ENCODE measurements at regions of chr16 and their contacts with region 1.

Region 1: DNA sequence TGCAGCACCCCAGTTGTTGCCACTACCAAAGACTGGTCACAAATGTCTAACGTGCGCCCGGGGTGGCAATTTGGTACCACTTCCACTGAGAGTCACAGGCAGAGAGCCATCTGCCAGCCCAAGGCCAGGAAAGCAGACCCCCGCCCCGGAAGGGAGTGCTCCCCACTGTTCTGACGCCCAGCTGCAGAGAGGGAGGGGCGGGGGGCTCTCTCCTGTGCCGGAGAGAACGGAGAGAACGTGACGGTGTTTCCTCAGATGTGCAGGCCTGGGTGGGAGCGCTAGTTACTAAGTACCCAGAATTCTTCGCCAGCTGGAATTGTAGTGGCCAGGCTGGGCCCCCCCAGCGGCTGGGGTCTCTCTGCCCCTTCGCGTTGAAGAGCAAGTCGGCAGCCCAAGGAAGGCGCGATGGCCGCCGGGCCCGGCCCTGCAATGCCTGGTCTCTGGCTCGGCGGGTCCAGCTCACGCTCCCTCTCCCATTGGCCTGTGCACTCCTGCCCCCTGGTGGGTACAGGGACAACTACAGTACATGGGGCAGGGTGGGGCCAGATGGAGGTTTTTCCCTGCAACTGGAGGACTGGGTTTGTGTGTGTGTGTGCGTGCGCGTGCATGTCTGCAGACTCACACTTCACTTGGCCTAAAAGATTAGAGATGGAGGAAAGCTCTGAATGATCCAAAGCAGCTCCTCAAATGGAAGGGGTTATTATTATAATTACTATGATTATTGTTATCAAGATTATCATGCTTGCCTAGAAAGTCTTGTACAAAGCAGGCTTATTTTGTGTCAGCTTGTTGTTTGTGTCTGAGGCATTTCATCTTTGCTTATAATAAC is 107.1 kb downstream of the AMFR start:
- DNase-seq: peak; percentile 91
- CTCF ChIP-seq: peak; percentile 89

Region 2: GRCh38 chr16:55944377-55944802 is 373.8 kb before region 1 on chr16:
- CTCF ChIA-PET with region 1: interaction called, 100 read pairs
- POLR2A ChIA-PET with region 1: no interaction called
- DNase-seq: peak; percentile 31
- CTCF ChIP-seq: peak; percentile 90

Region 3: GRCh38 chr16:56192635-56192945 is 125.6 kb before region 1 on chr16:
- CTCF ChIA-PET with region 1: no interaction called
- POLR2A ChIA-PET with region 1: no interaction called
- DNase-seq: no peak
- CTCF ChIP-seq: no peak

Region 4: GRCh38 chr16:56294579-56294978 is 23.6 kb before region 1 on chr16:
- CTCF ChIA-PET with region 1: interaction called, 12 read pairs
- POLR2A ChIA-PET with region 1: no interaction called
- DNase-seq: no peak
- CTCF ChIP-seq: no peak

Region 5: GRCh38 chr16:56343661-56344526 is 25.7 kb after region 1 on chr16:
- CTCF ChIA-PET with region 1: interaction called, 23 read pairs
- POLR2A ChIA-PET with region 1: no interaction called
- DNase-seq: no peak
- CTCF ChIP-seq: no peak

Measured in GM10248 (cell line).